ENCODE measurements at regions of chr2 and their contacts with region 1.

Region 1: DNA sequence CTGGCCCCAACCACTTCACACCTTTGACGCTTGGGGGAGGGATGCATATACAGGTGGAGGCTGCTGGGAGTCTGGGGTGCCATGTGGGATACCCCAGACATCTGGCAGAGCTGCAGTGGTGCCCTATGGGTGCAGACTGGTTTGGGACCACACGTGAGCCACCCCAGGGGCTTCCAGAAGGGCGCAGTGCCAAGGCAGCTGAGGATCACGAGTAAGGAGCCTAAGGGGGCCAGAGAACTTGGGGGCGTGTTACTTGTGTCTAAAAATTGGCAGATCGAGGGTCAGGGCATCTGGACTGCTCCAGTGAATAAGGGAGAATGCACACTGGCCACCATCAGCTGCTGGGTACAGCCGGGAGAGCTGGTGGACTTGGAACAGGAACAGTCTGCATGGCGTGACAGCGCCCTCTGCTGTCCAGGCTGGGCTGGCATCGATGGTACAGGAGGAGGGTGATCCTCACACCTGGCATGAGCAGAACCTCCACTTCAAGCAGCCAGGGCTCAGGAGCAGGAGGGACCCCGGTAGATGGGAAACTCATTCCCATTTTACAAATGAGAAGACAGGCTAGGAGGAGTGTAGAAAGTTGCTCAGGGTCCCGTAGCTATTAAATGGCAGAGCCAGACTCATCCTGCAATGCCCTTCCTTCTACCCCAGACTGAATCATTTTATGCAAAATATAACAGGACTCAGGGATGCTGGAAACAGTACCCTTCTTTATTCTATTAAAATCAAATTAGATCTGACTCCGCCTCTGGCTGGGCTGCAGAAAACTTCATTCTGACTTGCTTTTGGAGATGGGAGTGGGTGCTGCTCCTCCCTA is 60.4 kb downstream of the ATOH8 start:
- DNase-seq: peak; percentile 95

Region 2: GRCh38 chr2:85635636-85636035 is 178.6 kb before region 1 on chr2:
- intact Hi-C with region 1: loop called (anchors 2 kb)
- DNase-seq: peak; percentile 14

Region 3: GRCh38 chr2:85728883-85729824 is 85.0 kb before region 1 on chr2:
- intact Hi-C with region 1: loop called (anchors 1 kb)
- DNase-seq: peak; percentile 95

Region 4: GRCh38 chr2:85750587-85751575 is 63.3 kb before region 1 on chr2:
- intact Hi-C with region 1: loop called (anchors 2 kb)
- DNase-seq: peak; percentile 86